ENCODE measurements at regions of chr19 and their contacts with region 1.

Region 1: DNA sequence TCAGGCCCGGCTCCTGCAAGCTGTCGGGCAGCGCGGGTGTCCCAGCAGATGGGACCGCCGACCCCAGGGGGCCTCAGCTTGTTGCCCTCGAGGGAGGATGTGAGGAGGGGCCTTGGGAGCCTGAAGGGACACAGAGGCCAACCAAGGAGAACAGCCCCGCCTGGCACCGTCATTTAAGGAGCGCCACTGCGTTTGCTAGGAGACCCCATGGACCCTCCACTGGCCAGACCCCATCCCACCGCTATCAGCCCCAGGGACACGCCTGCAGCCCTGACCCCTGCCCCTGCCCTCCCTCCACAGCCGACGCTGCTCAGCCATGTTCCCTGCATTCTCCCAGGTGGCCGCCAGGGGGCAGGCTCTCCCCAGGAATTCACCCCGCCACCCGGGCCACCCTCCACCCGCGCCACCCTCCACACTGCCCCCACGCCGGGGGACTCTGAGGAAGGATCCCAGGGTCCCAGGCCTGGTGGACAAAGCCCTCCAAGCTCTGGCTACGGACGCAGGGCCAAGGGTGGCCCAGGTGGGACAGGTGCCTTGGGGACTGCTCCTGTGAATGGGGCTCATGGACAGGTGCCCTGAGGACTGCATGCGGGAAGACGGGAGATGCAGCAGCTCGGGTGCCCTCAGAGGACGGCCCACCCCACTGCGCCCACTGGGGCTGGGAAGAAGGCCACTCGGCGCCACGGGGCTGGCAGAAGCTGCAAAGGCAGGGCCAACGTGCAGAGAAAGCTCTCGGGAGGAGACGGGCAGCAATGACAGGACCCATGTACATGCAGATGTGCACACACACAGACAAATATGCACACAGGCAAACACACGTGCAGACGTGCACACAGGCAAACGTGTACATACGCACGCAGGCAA is 34.4 kb downstream of the PIP5K1C start:
- DNase-seq: peak; percentile 82
- H3K4me3 Mint-ChIP-seq: no peak overlapping the region
- H3K27ac Mint-ChIP-seq: no peak overlapping the region
- H3K4me1 Mint-ChIP-seq: peaks cover 5% of the 10 kb centered on the region
- H3K27me3 Mint-ChIP-seq: no peaks in the 10 kb centered on the region

Region 2: GRCh38 chr19:3710265-3710812 is 44.4 kb after region 1 on chr19:
- CTCF ChIA-PET with region 1: interaction called, 21 read pairs
- POLR2A ChIA-PET with region 1: no interaction called
- intact Hi-C with region 1: loop called (anchors 1 kb)
- DNase-seq: no peak
- H3K4me3 Mint-ChIP-seq: no peak overlapping the region
- H3K27ac Mint-ChIP-seq: no peak overlapping the region
- H3K4me1 Mint-ChIP-seq: peaks cover 4% of the 10 kb centered on the region
- H3K27me3 Mint-ChIP-seq: peaks cover 2% of the 10 kb centered on the region

Measured in activated CD4-positive, alpha-beta memory T cell treated with anti-CD3 and anti-CD28 coated beads for 36 hours (primary cell).